Left colon (tissue), 2 donors: ENCODE measurements at regions of chr22 and their contacts with region 1.

Region 1: GRCh38 chr22:39170825-39171622 is 18.5 kb upstream of the CBX7 start:
- DNase-seq: peak; percentile 70 to 89
- ATAC-seq: peak; percentile 96

Region 2: GRCh38 chr22:39309881-39310714 is 139.1 kb after region 1 on chr22:
- intact Hi-C with region 1: loop called (anchors 5 kb)
- DNase-seq: no peak
- ATAC-seq: no peak

Region 3: DNA sequence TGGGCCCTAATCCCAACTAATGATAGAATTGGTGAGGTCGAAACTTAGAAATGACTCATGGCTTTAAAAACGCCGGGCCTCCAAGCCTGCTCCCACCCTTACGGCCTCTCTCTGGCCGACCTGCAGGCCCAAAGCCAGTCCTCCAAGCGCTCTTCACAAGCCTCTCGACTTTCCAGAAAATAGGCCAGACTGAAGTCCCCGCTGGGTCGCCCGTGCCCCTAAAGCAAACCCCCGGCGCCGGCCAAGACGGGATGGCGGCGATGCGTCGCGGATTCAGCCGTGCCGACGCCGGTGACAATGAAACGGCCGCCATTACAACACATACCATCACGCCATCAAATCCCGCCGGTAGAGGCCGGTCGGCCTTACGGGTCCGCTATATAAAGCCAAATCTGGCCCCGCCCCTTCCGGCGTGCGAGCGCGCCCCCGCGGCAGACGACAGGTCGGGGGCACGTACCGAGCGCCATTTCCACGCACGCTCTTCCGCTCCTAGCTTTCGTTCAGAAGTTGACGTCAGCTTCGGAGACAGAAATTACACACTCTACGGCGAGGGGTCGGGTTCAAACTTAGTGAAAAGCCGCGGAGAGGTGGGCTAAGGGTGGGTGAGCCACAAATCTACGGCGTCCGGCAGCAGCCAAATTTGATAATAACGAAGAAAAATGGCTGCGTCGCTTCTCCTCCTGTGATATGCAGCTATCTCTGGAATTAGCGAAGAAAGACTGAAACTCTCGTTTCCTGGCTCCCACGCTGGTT is 148.4 kb after region 1 on chr22 and contains the start of gene RPL3:
- intact Hi-C with region 1: loop called (anchors 5 kb)
- DNase-seq: peak; percentile 95 to 98
- ATAC-seq: peak; percentile 82
- total RNA-seq, gene RPL3: 1,637 to 1,665 TPM